Dendritic cell treated with granulocyte-macrophage colony-stimulating factor and Interleukin-4, amounts not matched to agents 40 ng/mL and 50 ng/mL, for 4 days (primary cell): ENCODE measurements at regions of chr7 and their contacts with region 1.

Region 1: GRCh38 chr7:151085691-151086620 is at the start of gene AGAP3:
- H3K4me3 Mint-ChIP-seq: peak within 1 kb of the TSS; percentile 79
- H3K27ac Mint-ChIP-seq: peak within 1 kb of the TSS; percentile 96
- H3K4me1 Mint-ChIP-seq: peaks cover 63% of the 10 kb centered on the region
- H3K27me3 Mint-ChIP-seq: no peaks in the 10 kb centered on the region

Region 2: GRCh38 chr7:150860291-150860977 is 225.5 kb before region 1 on chr7:
- intact Hi-C with region 1: no loop called
- H3K4me3 Mint-ChIP-seq: no peak overlapping the region
- H3K27ac Mint-ChIP-seq: no peak overlapping the region
- H3K4me1 Mint-ChIP-seq: peaks cover 20% of the 10 kb centered on the region
- H3K27me3 Mint-ChIP-seq: peaks cover 1% of the 10 kb centered on the region

Region 3: DNA sequence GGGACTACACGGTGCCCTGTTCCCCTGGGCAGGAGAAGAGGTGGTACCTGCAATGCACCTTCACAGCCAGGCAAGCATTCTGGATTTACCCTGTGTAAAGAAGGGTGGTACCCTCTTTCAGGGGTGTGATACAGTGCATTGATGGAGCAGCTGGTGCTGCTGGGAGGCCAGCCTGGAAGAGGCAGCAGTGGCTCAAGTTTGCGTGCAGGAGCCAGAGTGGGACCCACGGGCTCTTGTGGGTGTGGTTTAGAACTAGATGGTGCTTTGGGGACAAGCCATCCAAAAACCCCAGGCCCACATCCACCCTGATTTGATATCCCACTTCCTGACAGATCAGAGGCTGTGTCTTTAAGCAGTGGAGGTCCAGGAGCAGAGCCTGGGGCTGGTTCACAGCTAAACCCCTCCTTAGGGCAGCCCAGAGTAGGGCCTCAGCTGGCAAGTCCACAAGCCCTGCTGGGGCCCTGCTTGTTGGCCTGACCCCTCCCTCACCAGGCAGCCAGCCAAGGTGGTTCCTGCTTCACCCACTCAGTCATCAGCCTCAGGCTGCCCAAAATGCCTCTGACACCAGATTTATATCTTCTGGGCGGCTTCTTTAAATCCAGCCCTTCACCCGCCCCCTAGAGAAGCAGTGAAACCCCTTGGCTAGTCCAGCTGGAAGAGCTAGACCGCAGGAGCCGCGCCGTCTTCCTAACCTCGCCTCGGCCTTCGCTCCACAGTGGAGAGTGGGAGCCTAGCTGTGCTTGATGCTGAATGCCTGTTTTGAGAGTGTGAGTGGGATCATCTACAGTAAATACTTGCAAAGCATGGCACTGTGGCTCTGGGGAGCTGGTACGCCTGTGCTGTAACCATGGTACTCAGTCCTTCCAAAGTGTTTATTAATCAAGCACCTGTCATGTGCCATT is 39.1 kb before region 1 on chr7:
- intact Hi-C with region 1: no loop called
- H3K4me3 Mint-ChIP-seq: no peak overlapping the region
- H3K27ac Mint-ChIP-seq: no peak overlapping the region
- H3K4me1 Mint-ChIP-seq: peaks cover 12% of the 10 kb centered on the region
- H3K27me3 Mint-ChIP-seq: peaks cover 31% of the 10 kb centered on the region

Region 4: GRCh38 chr7:151057989-151058780 is 27.8 kb before region 1 on chr7:
- intact Hi-C with region 1: loop called (anchors 2 kb)
- H3K4me3 Mint-ChIP-seq: peak overlapping the region; percentile 91
- H3K27ac Mint-ChIP-seq: peak overlapping the region; percentile 92
- H3K4me1 Mint-ChIP-seq: peaks cover 68% of the 10 kb centered on the region
- H3K27me3 Mint-ChIP-seq: no peaks in the 10 kb centered on the region